ENCODE measurements at regions of chr6 and their contacts with region 1.

Region 1: GRCh38 chr6:34207695-34208443 is 28.8 kb upstream of the HMGA1 start:
- DNase-seq: no peak
- H3K4me3 Mint-ChIP-seq: no peak overlapping the region
- H3K27ac Mint-ChIP-seq: peak overlapping the region; percentile 83
- H3K4me1 Mint-ChIP-seq: peaks cover 17% of the 10 kb centered on the region
- H3K27me3 Mint-ChIP-seq: no peaks in the 10 kb centered on the region

Region 2: GRCh38 chr6:34223956-34224940 is 16.4 kb after region 1 on chr6:
- intact Hi-C with region 1: loop called (anchors 1 kb)
- DNase-seq: peak; percentile 91
- H3K4me3 Mint-ChIP-seq: peak overlapping the region; percentile 60
- H3K27ac Mint-ChIP-seq: peak overlapping the region; percentile 84
- H3K4me1 Mint-ChIP-seq: peaks cover 24% of the 10 kb centered on the region
- H3K27me3 Mint-ChIP-seq: peaks cover 3% of the 10 kb centered on the region

Region 3: GRCh38 chr6:34852406-34853085 is 644.7 kb after region 1 on chr6:
- intact Hi-C with region 1: no loop called
- DNase-seq: no peak
- H3K4me3 Mint-ChIP-seq: no peak overlapping the region
- H3K27ac Mint-ChIP-seq: no peak overlapping the region
- H3K4me1 Mint-ChIP-seq: no peaks in the 10 kb centered on the region
- H3K27me3 Mint-ChIP-seq: no peaks in the 10 kb centered on the region